ENCODE measurements at regions of chr2 and their contacts with region 1.

Region 1: GRCh38 chr2:11389551-11390528 is 45.4 kb upstream of the ROCK2 start:
- DNase-seq: peak; percentile 77
- ATAC-seq: peak; percentile 29
- H3K4me3 ChIP-seq: no peak overlapping the region
- H3K27ac ChIP-seq: peak overlapping the region; percentile 61
- H3K4me1 ChIP-seq: peaks cover 49% of the 10 kb centered on the region
- H3K27me3 ChIP-seq: no peaks in the 10 kb centered on the region
- CTCF ChIP-seq: no peak

Region 2: DNA sequence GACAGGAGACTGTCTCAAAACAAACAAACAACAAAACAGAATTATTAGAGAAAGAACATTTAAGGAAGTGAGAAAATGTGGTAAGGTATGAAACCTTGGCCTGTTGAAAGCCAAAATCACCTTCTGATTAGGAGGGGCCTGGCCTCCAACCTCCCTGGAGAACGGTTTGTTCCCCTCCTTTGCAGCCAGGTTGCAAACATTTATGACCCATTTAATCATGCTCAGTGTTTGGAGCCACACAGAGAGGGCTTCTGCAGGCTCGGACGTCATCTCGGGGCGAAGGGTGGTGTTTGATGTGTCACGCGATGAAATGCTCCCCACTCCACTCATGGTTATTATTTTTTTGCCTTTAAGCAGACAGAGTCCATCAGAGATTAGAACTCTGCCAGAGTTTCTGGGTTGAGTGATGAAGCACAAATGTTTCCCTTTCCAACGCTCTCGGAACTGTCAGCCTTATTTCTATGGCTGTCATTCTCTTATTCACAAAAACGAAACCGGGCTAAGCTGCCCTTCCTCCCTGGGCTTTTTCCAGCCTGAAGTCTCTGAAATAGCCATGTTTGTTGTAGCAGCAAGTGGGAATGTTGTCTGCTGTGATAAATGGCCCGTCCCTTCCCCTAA is 11.8 kb before region 1 on chr2:
- CTCF ChIA-PET with region 1: interaction called, 4 read pairs
- POLR2A ChIA-PET with region 1: interaction called, 17 read pairs
- intact Hi-C with region 1: loop called (anchors 1 kb)
- DNase-seq: no peak
- ATAC-seq: no peak
- H3K4me3 ChIP-seq: no peak overlapping the region
- H3K27ac ChIP-seq: no peak overlapping the region
- H3K4me1 ChIP-seq: peaks cover 24% of the 10 kb centered on the region
- H3K27me3 ChIP-seq: no peaks in the 10 kb centered on the region
- CTCF ChIP-seq: no peak

Measured in PC-3 (cell line).